ENCODE measurements at regions of chr1 and their contacts with region 1.

Region 1: DNA sequence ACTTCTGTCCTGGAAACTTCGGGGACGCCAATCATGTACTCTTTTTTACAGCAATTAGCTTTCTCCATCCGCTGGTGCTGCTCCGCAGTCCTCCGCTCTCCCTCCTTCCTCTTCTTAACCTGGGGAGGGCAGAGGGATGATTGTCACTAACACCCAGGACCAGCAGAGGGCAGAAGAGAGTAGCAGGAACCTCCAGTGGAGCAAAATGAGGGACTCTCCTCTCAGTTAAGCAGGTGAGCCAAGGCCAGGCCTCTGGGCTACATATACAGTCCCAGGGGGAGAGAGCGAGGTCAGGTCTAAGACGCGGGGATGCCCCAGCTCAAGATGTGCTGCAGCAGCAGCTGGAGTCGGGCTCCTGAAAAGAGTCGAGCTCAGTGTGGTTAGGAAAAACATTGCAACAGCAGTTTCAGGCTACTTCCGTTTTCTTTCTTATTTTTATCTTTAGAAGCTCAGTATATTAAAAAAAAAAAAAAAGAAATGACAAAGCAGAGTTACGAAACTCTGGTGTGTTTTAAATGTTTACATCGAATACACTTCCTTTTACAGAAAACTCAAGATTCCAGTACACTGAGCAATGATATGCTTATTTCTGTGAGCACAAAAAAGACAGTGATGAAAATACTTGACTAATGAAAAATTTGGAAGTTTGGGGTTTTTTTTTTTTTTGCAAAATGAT is 25.7 kb upstream of the NLRP3 start:
- DNase-seq: peak; percentile 61 to 84 (median 81)
- ATAC-seq: peak; percentile 92 to 96
- H3K4me3 ChIP-seq: peak overlapping the region; percentile 46
- H3K27ac ChIP-seq: no peak overlapping the region
- H3K4me1 ChIP-seq: no peaks in the 10 kb centered on the region
- H3K27me3 ChIP-seq: no peaks in the 10 kb centered on the region

Region 2: GRCh38 chr1:247487057-247487456 is 96.8 kb after region 1 on chr1:
- intact Hi-C with region 1: loop called in 3 of 4 experiments (anchors 2 to 10 kb)
- DNase-seq: no peak
- ATAC-seq: peak; percentile 68 to 72
- H3K4me3 ChIP-seq: no peak overlapping the region
- H3K27ac ChIP-seq: no peak overlapping the region
- H3K4me1 ChIP-seq: no peaks in the 10 kb centered on the region
- H3K27me3 ChIP-seq: no peaks in the 10 kb centered on the region